Activated CD4-positive, alpha-beta T cell treated with anti-CD3 and anti-CD28 coated beads, Interleukin-2, amount 10 ng/mL, durations not matched to agents 24 days and 14 days (primary cell): ENCODE measurements at regions of chr10 and their contacts with region 1.

Region 1: DNA sequence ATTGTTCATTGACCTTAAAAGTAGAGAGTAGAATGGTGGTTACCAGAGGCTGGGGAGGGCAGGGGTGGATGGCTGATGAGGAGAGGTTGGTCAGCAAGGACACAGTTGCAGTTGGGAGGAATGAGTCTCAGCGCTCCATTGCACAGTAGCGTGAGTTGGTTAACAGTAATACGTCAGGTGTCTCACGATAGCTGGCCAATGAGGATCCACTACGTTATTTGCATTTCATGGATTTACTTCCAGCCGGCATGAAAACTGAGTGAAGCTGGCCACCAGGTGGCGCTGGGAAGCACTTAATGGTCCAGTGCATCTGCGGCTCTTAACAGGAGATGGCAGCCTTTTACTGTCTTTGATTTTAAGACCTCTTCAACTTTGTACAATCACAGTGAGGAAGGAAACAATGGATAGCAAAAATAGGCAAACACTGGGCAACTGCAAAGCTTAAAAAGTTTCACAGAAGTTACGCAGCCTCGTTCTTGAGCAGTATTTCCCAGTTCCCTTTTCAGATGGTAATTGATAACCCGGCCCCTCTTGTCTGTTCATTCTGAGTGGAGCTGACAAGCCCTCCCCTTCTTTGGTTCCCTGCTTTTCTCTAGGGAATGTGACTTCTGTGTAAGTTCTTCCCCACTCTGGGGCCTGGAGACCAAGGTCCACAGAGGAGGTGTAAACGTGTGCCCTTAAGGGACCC is 23.7 kb downstream of the AKR1E2 start:
- DNase-seq: peak; percentile 96
- H3K4me3 Mint-ChIP-seq: peak overlapping the region; percentile 20
- H3K27ac Mint-ChIP-seq: peak overlapping the region; percentile 27
- H3K4me1 Mint-ChIP-seq: peaks cover 11% of the 10 kb centered on the region
- H3K27me3 Mint-ChIP-seq: no peaks in the 10 kb centered on the region

Region 2: GRCh38 chr10:4825851-4826665 is 23.6 kb before region 1 on chr10 and contains the start of gene AKR1E2:
- intact Hi-C with region 1: loop called (anchors 2 kb)
- DNase-seq: peak; percentile 95
- H3K4me3 Mint-ChIP-seq: peak within 1 kb of the TSS; percentile 87
- H3K27ac Mint-ChIP-seq: peak within 1 kb of the TSS; percentile 81
- H3K4me1 Mint-ChIP-seq: peaks cover 20% of the 10 kb centered on the region
- H3K27me3 Mint-ChIP-seq: peaks cover 34% of the 10 kb centered on the region
- total RNA-seq, gene AKR1E2: 6.6 and 7.9 TPM in 2 replicates

Region 3: DNA sequence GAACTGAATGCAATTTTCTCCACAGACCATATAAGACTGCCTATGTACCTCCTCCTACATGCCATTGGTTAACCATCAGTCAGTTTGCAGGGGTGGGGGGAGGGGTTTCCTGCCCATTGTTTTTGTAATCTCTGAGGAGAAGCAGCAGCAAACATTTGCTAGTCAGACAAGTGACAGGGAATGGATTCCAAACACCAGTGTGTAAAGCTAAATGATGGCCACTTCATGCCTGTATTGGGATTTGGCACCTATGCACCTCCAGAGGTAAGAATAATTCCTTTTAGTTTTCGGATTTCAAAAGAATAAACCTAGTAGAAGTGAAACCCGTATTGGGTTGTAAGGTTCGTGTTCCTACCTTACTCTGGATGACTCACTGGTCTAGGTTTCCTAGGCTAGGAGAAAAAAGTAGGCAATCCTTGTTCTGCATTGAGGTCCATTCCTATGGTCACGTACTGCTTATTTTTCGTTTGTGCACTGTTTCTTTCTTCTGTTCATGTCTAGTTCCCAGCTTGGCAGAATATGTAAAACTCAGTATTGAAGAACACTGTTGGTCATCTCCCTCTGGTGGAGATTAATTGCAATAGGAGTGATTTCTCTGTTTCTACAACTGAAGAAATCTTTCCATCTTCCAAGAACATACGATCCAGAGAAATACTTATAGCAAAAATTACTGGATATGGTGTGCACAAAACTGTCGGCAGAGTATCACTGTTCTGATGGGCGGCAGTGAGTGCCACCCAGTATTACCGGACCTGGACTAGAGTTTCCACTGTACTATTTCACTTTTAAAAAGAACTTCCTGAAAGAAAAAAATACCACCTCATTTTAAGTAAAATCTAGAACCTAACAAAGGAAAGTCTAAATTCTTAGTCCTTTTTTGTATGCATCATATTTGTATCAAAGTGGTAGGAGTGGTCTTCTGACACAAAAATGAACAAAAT is 244.8 kb after region 1 on chr10 and contains the start of gene AKR1C3:
- intact Hi-C with region 1: loop called (anchors 10 kb)
- DNase-seq: peak; percentile 74
- H3K4me3 Mint-ChIP-seq: peak within 1 kb of the TSS; percentile 56
- H3K27ac Mint-ChIP-seq: no peak within 1 kb of the TSS
- H3K4me1 Mint-ChIP-seq: peaks cover 5% of the 10 kb centered on the region
- H3K27me3 Mint-ChIP-seq: peaks cover 12% of the 10 kb centered on the region
- total RNA-seq, gene AKR1C3: not detected in 2 replicates

Region 4: GRCh38 chr10:5385224-5385623 is 535.5 kb after region 1 on chr10:
- intact Hi-C with region 1: loop called (anchors 1 kb)
- DNase-seq: no peak
- H3K4me3 Mint-ChIP-seq: no peak overlapping the region
- H3K27ac Mint-ChIP-seq: no peak overlapping the region
- H3K4me1 Mint-ChIP-seq: no peaks in the 10 kb centered on the region
- H3K27me3 Mint-ChIP-seq: no peaks in the 10 kb centered on the region

Region 5: GRCh38 chr10:5629303-5630111 is 779.8 kb after region 1 on chr10:
- intact Hi-C with region 1: loop called (anchors 2 kb)
- DNase-seq: peak; percentile 96
- H3K4me3 Mint-ChIP-seq: peak overlapping the region; percentile 50
- H3K27ac Mint-ChIP-seq: peak overlapping the region; percentile 87
- H3K4me1 Mint-ChIP-seq: peaks cover 20% of the 10 kb centered on the region
- H3K27me3 Mint-ChIP-seq: peaks cover 4% of the 10 kb centered on the region